ENCODE measurements at regions of chr20 and their contacts with region 1.

Region 1: DNA sequence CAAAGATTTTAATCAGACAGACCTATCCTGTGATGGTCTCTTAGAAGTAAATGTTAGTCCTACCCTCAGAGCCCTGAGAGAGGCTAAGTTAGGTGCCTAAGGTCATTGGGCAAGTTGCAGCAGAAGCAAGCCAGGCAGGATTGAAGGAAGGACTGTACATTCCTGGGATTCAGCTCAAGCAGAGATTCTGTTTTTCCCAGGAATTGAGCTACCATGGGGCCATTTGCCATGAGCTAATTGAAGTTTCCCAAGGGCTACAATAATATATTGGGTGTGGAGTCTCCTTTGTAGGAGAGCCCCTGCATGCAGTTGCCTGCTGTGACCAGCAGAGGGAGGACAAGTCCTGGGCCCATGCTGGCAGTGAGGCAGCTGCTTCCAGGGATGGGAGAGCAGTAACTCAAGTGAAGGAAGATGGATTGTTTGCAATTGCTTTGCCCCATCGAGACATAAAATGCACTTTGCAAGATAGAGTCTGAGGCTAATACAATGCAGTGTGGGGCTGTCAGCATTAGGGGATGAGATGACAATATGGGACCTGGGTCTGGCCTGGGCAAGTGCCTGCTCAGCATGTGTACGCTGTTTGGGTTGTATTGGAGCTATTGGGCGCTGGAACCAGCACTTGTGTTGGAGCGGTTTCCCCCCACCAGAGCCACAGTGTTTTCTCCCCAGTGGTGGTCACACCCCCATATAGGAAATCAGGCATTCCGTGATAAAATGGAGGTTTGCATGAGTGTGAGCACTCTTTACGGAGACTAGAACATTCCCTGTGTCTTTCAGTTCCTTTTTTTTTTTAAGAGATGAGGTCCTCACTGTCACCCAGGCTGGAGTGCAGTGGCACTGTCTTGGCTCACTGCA is 27.9 kb downstream of the DNMT3B start:
- DNase-seq: peak; percentile 97
- H3K27ac ChIP-seq: no peak overlapping the region
- CTCF ChIP-seq: peak; percentile 100

Region 2: GRCh38 chr20:32589256-32589655 is 200.9 kb before region 1 on chr20:
- CTCF ChIA-PET with region 1: no interaction called
- POLR2A ChIA-PET with region 1: no interaction called
- DNase-seq: peak; percentile 70
- H3K27ac ChIP-seq: no peak overlapping the region
- CTCF ChIP-seq: no peak

Region 3: GRCh38 chr20:32674362-32674789 is 115.7 kb before region 1 on chr20:
- CTCF ChIA-PET with region 1: interaction called, 15 read pairs
- POLR2A ChIA-PET with region 1: no interaction called
- DNase-seq: peak; percentile 82
- H3K27ac ChIP-seq: no peak overlapping the region
- CTCF ChIP-seq: peak; percentile 84

Region 4: DNA sequence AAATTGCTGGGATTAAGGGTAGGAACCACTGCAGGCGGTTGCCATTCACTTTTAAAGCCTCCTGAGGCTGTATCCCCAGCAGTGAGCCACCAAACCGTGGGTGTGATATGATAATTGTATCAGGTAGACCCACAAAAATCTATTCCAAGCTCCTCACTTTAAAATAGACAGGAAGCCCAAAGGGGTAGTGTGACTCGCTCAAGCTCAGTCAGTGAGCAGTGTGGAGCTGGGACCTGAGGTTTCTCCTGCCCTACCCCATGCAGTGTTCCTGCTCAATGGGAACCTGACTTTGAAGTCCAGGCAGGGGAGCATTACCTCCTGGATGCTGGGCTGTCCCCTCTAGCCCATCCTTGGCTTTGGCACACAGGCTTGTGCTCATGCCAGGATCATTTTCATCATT is 14.7 kb after region 1 on chr20:
- CTCF ChIA-PET with region 1: interaction called, 24 read pairs
- POLR2A ChIA-PET with region 1: no interaction called
- DNase-seq: no peak
- H3K27ac ChIP-seq: no peak overlapping the region
- CTCF ChIP-seq: no peak

Region 5: GRCh38 chr20:32830437-32830836 is 40.3 kb after region 1 on chr20:
- CTCF ChIA-PET with region 1: interaction called, 13 read pairs
- POLR2A ChIA-PET with region 1: no interaction called
- DNase-seq: no peak
- H3K27ac ChIP-seq: no peak overlapping the region
- CTCF ChIP-seq: no peak

Region 6: GRCh38 chr20:32995802-32996201 is 205.7 kb after region 1 on chr20:
- CTCF ChIA-PET with region 1: no interaction called
- POLR2A ChIA-PET with region 1: no interaction called
- DNase-seq: no peak
- H3K27ac ChIP-seq: no peak overlapping the region
- CTCF ChIP-seq: no peak

Region 7: DNA sequence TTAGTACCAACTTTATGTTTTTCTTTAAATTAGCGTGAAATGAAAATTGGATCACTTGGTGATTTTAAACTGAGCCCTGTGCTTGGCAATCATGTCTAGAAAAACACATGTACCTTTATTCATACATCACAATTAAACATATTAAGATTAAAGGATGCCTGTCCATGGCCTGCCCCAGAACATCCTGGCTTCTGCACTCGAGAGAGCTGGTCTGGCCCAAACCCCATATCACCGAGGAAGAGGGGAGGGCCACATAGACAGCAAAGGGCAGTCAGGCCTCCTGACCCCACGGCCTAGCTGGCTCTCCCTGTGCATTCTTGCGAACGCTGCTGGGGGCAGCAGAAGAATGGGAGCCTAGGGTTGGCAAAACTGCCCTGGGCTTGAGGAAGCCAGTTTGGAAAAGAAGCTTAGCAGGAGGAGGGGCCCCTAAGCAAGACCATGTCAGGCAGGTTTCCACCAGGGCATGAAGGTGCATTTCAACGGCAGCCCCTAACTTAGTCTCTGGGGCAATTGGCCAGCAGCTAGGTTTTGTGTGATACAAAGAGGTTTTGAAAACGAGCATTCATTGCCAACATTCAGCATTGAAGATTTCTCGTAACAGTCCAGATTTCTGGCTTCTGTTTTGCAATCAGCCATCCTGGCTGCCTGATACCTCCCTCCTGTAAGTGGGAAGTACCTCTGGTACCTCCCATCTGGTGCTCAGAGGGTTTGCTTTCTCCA is 272.1 kb after region 1 on chr20:
- CTCF ChIA-PET with region 1: no interaction called
- POLR2A ChIA-PET with region 1: no interaction called
- DNase-seq: no peak
- H3K27ac ChIP-seq: no peak overlapping the region
- CTCF ChIP-seq: no peak

Region 8: DNA sequence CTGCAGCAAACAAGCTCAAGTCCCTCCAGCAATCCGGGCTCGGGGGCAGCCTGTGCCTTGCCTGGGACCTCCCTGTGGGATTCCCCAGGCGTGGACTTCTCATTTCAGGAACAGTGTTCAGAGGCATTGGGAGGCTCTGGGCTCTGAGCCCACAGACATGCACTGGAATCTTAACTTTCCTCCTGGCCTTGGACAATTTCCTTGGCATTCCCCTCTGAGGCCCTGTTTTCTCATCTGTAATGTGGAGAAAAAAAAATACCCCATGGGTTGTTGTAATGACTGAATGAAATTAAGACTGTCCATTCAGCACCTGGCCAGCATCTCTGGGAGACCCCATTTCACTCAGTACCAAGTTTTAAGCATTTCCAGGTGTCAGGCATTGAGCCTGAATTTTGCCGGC is 306.9 kb after region 1 on chr20:
- CTCF ChIA-PET with region 1: interaction called, 13 read pairs
- POLR2A ChIA-PET with region 1: no interaction called
- DNase-seq: no peak
- H3K27ac ChIP-seq: no peak overlapping the region
- CTCF ChIP-seq: no peak